Common myeloid progenitor, CD34-positive (primary cell): ENCODE measurements at regions of chr14 and their contacts with region 1.

Region 1: GRCh38 chr14:73472185-73473114 is 14.1 kb upstream of the NUMB start:
- DNase-seq: peak; percentile 75 to 88 (median 86)
- H3K4me3 ChIP-seq: no peak overlapping the region
- H3K27ac ChIP-seq: no peak overlapping the region
- H3K4me1 ChIP-seq: peaks cover 0 to 2% (median 0%) of the 10 kb centered on the region in 4 experiments
- H3K27me3 ChIP-seq: peaks cover 0 to 2% (median 0%) of the 10 kb centered on the region in 5 experiments

Region 2: DNA sequence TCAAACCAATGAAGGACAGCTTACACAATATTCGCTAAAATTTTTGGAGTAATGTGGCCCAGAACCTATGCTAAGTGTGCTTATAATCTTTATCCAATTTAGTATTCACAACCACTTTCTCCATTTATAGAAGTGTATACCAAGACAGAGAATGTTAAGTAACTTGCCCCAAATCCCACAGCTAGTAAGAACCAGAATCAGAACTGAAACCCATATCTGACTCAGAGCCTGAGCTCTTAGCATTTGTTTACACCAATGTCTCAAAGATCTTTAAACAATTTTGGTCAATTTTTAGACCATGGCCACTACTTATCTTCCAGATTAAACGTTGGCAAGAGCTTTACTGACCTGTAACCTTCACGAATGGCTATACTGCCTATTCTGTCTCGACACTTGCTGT is 182.2 kb before region 1 on chr14:
- CTCF ChIA-PET with region 1: interaction called, 62 read pairs
- POLR2A ChIA-PET with region 1: interaction called, 5 read pairs
- DNase-seq: no peak
- H3K4me3 ChIP-seq: no peak overlapping the region
- H3K27ac ChIP-seq: no peak overlapping the region
- H3K4me1 ChIP-seq: no peaks in the 10 kb centered on the region
- H3K27me3 ChIP-seq: no peaks in the 10 kb centered on the region